Activated CD4-positive, alpha-beta memory T cell treated with anti-CD3 and anti-CD28 coated beads for 36 hours (primary cell): ENCODE measurements at regions of chr5 and their contacts with region 1.

Region 1: DNA sequence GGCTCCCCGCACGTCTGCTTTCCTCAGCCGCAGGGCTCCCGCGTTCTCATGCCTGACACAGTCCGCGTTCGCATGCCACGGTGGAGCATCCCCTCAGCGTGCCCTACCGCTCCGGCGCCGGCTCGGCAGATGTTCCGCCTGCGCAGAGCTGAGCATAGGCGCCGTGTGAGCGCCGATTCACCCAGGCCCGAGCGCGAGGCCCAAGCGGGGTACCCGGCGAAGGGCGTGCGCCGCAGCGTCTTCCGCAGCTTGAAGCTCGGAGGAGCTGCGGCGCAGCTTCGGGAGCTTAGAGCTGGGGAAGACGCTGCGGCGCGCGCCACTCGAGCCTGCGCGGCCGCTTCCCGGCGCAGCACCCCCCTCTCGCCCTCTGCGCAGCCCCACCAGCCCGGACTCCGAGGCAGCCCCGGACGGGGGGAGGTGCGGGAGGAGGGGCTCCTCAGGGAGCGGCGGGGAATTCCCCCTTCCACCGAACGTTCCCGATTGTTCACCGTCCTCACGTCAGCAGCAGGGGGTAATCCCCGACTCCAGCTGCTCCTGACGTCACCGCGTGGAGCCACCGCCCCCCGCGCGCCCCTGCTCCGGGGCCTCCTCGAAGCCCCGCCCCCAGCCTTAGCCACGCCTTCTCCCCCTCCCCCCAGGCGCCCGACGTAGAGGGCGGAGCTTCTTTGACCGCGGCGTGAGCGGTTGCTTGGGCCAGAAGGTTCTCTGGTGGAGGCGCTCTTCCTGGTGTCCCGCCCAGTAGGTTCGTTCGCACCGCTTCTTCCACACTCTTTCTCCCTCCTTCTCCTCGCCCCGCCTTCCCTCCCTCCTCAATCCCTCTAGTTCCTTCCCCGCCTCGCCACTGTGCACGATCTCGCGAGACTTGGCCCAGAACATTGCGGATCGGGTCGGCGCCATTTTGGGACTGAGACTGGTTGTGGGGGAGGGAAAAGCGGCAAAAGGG is at the start of gene GPBP1:
- DNase-seq: peak; percentile 98
- H3K4me3 Mint-ChIP-seq: peak within 1 kb of the TSS; percentile 86
- H3K27ac Mint-ChIP-seq: peak within 1 kb of the TSS; percentile 98
- H3K4me1 Mint-ChIP-seq: peaks cover 20% of the 10 kb centered on the region
- H3K27me3 Mint-ChIP-seq: no peaks in the 10 kb centered on the region
- total RNA-seq, gene GPBP1: 94.1 to 98.5 TPM

Region 2: DNA sequence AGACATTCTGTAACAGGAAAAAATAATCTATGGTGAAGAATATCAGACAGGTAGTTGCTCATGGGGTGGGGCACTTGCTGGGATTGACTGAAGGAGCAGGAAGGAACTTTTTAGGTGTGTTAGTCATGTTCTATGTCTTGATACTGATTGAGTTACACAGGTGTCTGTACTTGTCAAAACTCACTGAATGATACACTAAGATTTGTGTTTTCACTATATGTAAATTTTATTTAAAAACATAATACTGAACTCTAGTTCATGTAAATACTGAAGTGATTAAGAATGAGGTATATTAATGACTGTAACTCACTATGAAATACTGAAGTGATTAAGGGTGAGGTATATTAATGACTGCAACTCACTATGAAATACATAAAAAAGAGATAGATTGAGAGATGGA is 1207.2 kb before region 1 on chr5:
- CTCF ChIA-PET with region 1: no interaction called
- POLR2A ChIA-PET with region 1: no interaction called
- intact Hi-C with region 1: no loop called
- DNase-seq: no peak
- H3K4me3 Mint-ChIP-seq: no peak overlapping the region
- H3K27ac Mint-ChIP-seq: peak overlapping the region; percentile 34
- H3K4me1 Mint-ChIP-seq: peaks cover 45% of the 10 kb centered on the region
- H3K27me3 Mint-ChIP-seq: no peaks in the 10 kb centered on the region

Region 3: GRCh38 chr5:56909294-56910209 is 263.9 kb before region 1 on chr5 and contains the start of gene SETD9:
- CTCF ChIA-PET with region 1: no interaction called
- POLR2A ChIA-PET with region 1: interaction called, 10 read pairs
- intact Hi-C with region 1: loop called (anchors 1 kb)
- DNase-seq: peak; percentile 97
- H3K4me3 Mint-ChIP-seq: peak within 1 kb of the TSS; percentile 77
- H3K27ac Mint-ChIP-seq: peak within 1 kb of the TSS; percentile 94
- H3K4me1 Mint-ChIP-seq: peaks cover 20% of the 10 kb centered on the region
- H3K27me3 Mint-ChIP-seq: no peaks in the 10 kb centered on the region
- total RNA-seq, gene SETD9: 5.1 to 7.4 TPM

Region 4: DNA sequence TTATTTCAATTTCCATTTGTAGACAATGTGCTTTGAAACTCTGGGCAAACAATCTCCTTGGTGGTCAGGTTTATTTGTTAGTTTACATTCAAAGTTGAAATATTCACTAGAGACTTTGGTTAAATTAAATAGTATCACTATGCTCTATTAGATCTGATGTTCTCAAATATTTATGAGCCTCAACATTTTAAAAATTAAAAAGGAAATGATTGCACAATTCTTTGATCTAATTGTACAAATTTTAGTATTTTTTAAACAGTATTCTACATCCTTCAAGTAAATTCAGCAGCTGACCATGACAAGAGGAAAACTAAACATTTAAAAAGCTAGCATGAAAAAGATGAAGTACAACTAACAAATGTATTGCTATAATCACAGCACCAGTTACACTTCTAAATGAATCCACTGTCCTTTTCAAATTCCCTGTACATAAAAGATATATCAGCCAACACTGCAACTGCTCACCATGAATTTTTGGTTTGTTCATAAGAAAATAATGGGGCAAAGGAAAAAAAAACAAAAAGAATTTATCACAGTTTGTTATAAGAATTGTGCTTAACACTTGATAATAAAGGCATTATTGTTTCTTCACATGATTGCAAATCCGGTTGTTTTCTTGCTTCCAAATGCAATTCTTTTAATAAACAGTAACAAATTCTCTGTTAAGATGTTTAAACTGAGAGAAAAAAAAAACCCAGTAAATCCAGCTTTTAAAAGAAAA is 253.4 kb before region 1 on chr5:
- CTCF ChIA-PET with region 1: no interaction called
- POLR2A ChIA-PET with region 1: no interaction called
- intact Hi-C with region 1: no loop called
- DNase-seq: no peak
- H3K4me3 Mint-ChIP-seq: no peak overlapping the region
- H3K27ac Mint-ChIP-seq: no peak overlapping the region
- H3K4me1 Mint-ChIP-seq: no peaks in the 10 kb centered on the region
- H3K27me3 Mint-ChIP-seq: no peaks in the 10 kb centered on the region

Region 5: GRCh38 chr5:56951946-56952691 is 221.3 kb before region 1 on chr5 and contains the start of gene MIER3:
- CTCF ChIA-PET with region 1: interaction called, 4 read pairs
- POLR2A ChIA-PET with region 1: interaction called, 3 read pairs
- intact Hi-C with region 1: loop called (anchors 2 kb)
- DNase-seq: peak; percentile 86
- H3K4me3 Mint-ChIP-seq: peak within 1 kb of the TSS; percentile 96
- H3K27ac Mint-ChIP-seq: peak within 1 kb of the TSS; percentile 69
- H3K4me1 Mint-ChIP-seq: peaks cover 15% of the 10 kb centered on the region
- H3K27me3 Mint-ChIP-seq: peaks cover 11% of the 10 kb centered on the region
- total RNA-seq, gene MIER3: 16.5 to 17.2 TPM

Region 6: GRCh38 chr5:57117596-57117995 is 55.9 kb before region 1 on chr5:
- CTCF ChIA-PET with region 1: no interaction called
- POLR2A ChIA-PET with region 1: no interaction called
- intact Hi-C with region 1: loop called (anchors 2 kb)
- DNase-seq: peak; percentile 75
- H3K4me3 Mint-ChIP-seq: no peak overlapping the region
- H3K27ac Mint-ChIP-seq: peak overlapping the region; percentile 54
- H3K4me1 Mint-ChIP-seq: peaks cover 15% of the 10 kb centered on the region
- H3K27me3 Mint-ChIP-seq: no peaks in the 10 kb centered on the region

Region 7: DNA sequence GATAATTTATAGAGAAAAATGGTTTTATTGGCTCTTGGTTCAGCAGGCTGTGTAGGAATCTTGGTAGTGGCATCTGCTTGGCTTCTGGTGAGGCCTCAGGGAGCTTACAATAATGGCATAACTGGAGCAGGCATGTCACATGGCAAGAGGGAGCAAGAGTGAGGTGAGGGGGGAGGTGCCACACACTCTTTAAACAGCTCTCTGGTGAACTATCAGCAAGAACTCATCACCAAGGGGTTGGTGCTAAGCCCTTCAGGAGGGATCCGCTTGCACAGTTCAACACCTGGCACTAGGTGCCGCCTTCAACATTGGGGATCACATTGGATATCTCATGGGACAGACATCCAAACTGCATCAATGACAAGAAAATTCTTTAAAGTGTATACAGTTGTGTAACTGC is 10.9 kb after region 1 on chr5:
- CTCF ChIA-PET with region 1: interaction called, 3 read pairs
- POLR2A ChIA-PET with region 1: no interaction called
- intact Hi-C with region 1: loop called (anchors 1 kb)
- DNase-seq: peak; percentile 19
- H3K4me3 Mint-ChIP-seq: no peak overlapping the region
- H3K27ac Mint-ChIP-seq: no peak overlapping the region
- H3K4me1 Mint-ChIP-seq: peaks cover 85% of the 10 kb centered on the region
- H3K27me3 Mint-ChIP-seq: no peaks in the 10 kb centered on the region

Region 8: DNA sequence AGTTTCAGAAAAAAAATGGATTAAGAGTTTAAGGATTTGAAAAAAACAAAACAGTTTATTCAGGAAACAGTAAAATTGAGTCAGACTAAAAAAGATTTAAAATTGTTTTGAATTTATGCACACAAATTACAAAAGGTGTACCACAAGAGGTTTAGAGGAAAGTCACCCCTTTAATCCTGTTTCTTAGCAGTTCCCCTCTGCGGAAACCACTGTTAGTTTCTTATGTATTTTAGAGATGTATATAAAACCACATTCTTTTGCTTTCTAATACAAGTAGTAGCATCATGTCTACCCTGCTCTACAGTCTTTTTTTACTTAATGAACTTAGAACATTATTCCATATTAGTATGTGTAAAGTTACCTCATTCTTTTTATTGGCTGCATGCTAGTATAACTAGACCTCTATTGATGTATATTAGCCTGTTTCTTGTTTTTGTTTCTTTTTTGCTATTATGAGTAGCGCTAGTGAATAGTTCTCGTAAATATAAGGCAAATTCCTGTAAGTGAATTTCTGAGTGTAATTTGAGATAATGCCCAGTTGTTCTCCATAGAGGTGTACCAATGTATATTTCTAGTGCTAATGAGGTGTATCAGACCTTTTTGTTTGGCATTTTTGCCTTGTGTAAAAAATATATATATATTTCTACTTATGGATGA is 20.4 kb after region 1 on chr5:
- CTCF ChIA-PET with region 1: interaction called, 5 read pairs
- POLR2A ChIA-PET with region 1: interaction called, 4 read pairs
- intact Hi-C with region 1: loop called (anchors 1 kb)
- DNase-seq: no peak
- H3K4me3 Mint-ChIP-seq: peak overlapping the region; percentile 34
- H3K27ac Mint-ChIP-seq: peak overlapping the region; percentile 82
- H3K4me1 Mint-ChIP-seq: peaks cover 72% of the 10 kb centered on the region
- H3K27me3 Mint-ChIP-seq: no peaks in the 10 kb centered on the region

Region 9: DNA sequence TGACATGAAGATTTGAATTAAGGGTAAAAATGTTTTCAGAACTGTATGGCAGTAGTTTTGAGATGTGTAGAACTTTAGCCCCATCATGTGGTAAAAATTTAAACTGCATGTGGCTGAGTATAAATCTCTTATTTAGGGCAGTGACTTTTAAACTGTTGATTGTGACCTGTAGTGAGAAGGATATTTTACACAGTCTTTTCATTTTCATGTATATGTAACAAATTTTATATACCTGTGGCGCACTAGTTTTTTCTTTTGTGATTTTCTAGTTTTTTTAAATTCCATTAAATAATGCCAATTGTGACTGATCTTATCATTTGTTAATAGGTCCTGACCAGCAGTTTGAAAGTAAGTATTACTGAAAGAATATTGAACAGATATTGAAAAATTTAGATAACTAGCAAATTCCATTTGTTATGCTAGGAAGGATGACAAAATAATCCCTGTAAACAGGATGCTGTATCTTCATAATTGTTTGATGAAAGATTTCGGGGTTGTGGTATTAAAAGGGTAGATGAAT is 47.7 kb after region 1 on chr5:
- CTCF ChIA-PET with region 1: interaction called, 5 read pairs
- POLR2A ChIA-PET with region 1: interaction called, 3 read pairs
- intact Hi-C with region 1: loop called (anchors 1 kb)
- DNase-seq: no peak
- H3K4me3 Mint-ChIP-seq: no peak overlapping the region
- H3K27ac Mint-ChIP-seq: peak overlapping the region; percentile 56
- H3K4me1 Mint-ChIP-seq: peaks cover 51% of the 10 kb centered on the region
- H3K27me3 Mint-ChIP-seq: no peaks in the 10 kb centered on the region